Endothelial cell of umbilical vein (primary cell): ENCODE measurements at regions of chr9 and their contacts with region 1.

Region 1: DNA sequence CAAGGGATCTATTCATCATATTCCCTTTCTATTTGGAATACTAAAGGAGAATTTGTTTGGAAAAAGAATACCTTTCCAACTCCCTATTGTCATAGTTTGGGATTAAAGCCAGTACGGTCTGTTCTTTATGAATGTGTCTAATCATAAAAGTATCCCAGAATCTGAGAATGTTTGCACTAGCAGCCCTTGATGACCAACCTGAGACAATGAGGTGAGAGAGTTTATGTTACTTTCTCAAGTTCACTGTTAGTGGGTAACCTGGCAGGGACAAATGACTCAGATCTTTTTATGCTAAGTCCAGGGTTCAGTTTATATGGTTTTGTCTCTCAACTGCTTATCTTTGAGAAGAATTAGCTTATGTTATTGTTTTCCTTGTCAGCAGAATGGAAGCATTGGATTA is 25.3 kb upstream of the TLR4 start:
- DNase-seq: peak; percentile 82
- H3K4me3 ChIP-seq: peak overlapping the region in 2 of 3 experiments; percentile 43 to 68
- H3K27ac ChIP-seq: peak overlapping the region; percentile 85
- H3K4me1 ChIP-seq: peaks cover 45% of the 10 kb centered on the region
- H3K27me3 ChIP-seq: no peaks in the 10 kb centered on the region
- CTCF ChIP-seq: no peak
- POLR2A ChIP-seq: no peak

Region 2: DNA sequence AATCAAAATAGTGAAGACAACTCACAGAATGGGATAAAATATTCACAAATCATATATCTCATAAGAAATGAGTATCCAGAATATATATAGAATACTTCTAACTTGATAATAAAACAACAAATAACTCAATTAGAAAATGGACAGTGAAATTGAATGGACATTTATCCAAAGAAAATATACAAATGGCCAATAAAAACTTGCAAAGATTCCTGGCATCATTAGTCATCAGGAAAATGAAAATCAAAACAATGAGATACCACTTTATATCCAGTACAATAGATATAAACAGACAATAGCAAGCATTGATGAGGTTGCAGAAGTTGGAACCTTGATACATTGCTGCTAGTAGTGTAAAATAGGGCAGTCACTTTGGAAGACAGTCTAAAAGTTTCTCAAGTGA is 12.5 kb after region 1 on chr9:
- CTCF ChIA-PET with region 1: interaction called, 3 read pairs
- POLR2A ChIA-PET with region 1: interaction called, 3 read pairs
- dilution Hi-C with region 1: no loop called
- intact Hi-C with region 1: loop called (anchors 1 kb)
- DNase-seq: peak; percentile 75
- H3K4me3 ChIP-seq: no peak overlapping the region
- H3K27ac ChIP-seq: peak overlapping the region; percentile 12
- H3K4me1 ChIP-seq: peaks cover 14% of the 10 kb centered on the region
- H3K27me3 ChIP-seq: no peaks in the 10 kb centered on the region
- CTCF ChIP-seq: no peak
- POLR2A ChIP-seq: no peak

Region 3: DNA sequence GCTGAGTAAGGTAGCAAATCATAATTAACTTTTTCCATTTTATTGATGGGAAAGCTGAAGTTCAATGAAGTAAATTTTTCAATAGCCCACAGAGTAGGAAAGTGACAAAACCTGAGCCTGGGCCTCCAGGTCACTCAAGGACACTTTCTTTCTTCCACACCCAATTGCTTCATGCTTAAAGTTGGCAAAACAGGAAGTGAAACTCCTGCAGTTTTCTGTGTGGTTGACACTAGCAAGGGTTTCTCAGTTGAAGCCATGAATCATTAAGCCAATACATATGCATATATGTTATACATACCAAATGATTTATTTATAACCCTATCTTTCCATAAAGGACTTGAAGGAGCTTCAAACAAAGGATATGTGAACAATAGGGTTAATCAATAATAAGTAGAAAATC is 39.2 kb after region 1 on chr9:
- CTCF ChIA-PET with region 1: interaction called, 11 read pairs
- POLR2A ChIA-PET with region 1: no interaction called
- dilution Hi-C with region 1: no loop called
- intact Hi-C with region 1: loop called (anchors 5 kb)
- DNase-seq: peak; percentile 54
- H3K4me3 ChIP-seq: no peak overlapping the region
- H3K27ac ChIP-seq: no peak overlapping the region
- H3K4me1 ChIP-seq: peaks cover 28% of the 10 kb centered on the region
- H3K27me3 ChIP-seq: no peaks in the 10 kb centered on the region
- CTCF ChIP-seq: no peak
- POLR2A ChIP-seq: no peak

Region 4: GRCh38 chr9:117725426-117725887 is 46.6 kb after region 1 on chr9:
- CTCF ChIA-PET with region 1: interaction called, 11 read pairs
- POLR2A ChIA-PET with region 1: no interaction called
- dilution Hi-C with region 1: no loop called
- intact Hi-C with region 1: no loop called
- DNase-seq: no peak
- H3K4me3 ChIP-seq: no peak overlapping the region
- H3K27ac ChIP-seq: no peak overlapping the region
- H3K4me1 ChIP-seq: peaks cover 5% of the 10 kb centered on the region
- H3K27me3 ChIP-seq: no peaks in the 10 kb centered on the region
- CTCF ChIP-seq: no peak
- POLR2A ChIP-seq: no peak

Region 5: GRCh38 chr9:117763314-117763713 is 84.4 kb after region 1 on chr9:
- CTCF ChIA-PET with region 1: no interaction called
- POLR2A ChIA-PET with region 1: no interaction called
- dilution Hi-C with region 1: no loop called
- intact Hi-C with region 1: loop called (anchors 5 kb)
- DNase-seq: peak; percentile 60
- H3K4me3 ChIP-seq: no peak overlapping the region
- H3K27ac ChIP-seq: peak overlapping the region; percentile 16
- H3K4me1 ChIP-seq: peaks cover 14% of the 10 kb centered on the region
- H3K27me3 ChIP-seq: no peaks in the 10 kb centered on the region
- CTCF ChIP-seq: no peak
- POLR2A ChIP-seq: no peak

Region 6: DNA sequence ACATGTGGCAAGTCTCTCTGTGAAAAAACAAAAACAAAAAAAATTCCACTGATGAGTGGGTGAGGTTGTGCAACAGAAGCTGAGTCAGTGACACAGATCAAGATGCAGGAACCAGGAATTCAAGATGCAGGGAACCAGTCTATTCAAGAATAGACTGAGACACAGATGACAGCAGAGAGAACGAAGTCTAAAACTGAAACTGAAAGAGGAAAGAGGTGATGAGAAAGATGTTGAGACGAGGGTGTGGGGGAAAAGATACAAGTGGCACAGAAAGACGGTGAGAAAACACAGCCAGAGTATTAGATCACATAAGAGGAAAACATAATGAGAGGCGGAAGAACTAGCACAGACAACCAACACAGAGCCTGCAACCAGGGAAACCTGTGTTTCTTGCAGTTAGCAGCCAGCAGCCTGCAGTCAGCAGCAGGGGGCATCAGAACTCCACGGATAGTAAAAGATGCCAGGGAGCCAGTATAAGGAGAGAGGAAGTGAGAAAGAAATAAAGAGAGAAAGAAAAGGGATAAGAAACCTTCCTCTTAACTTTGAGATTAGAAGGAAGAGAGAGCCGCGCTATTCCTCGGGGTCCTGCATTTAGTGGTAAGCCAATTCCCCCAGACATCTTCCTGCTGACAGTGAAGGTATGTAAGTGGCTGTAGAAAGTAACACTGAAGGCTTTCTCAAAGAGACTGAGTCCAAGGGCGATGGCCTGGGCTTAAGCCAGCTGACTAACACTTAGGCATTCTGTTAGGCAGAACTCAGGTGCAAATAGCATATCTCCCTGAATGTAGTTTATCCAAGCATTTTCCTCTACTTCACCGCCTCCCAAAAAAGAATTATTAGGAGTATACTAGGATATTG is 104.3 kb after region 1 on chr9:
- CTCF ChIA-PET with region 1: interaction called, 15 read pairs
- POLR2A ChIA-PET with region 1: no interaction called
- dilution Hi-C with region 1: no loop called
- intact Hi-C with region 1: loop called (anchors 1 kb)
- DNase-seq: peak; percentile 83
- H3K4me3 ChIP-seq: peak overlapping the region; percentile 39 to 77 (median 52)
- H3K27ac ChIP-seq: no peak overlapping the region
- H3K4me1 ChIP-seq: peaks cover 7% of the 10 kb centered on the region
- H3K27me3 ChIP-seq: no peaks in the 10 kb centered on the region
- CTCF ChIP-seq: peak; percentile 80
- POLR2A ChIP-seq: no peak